Activated CD4-positive, alpha-beta memory T cell treated with anti-CD3 and anti-CD28 coated beads, Interleukin-2, amount 10 ng/mL, durations not matched to agents 7 days and 5 days (primary cell): ENCODE measurements at regions of chr11 and their contacts with region 1.

Region 1: GRCh38 chr11:61049859-61050258 is 52.4 kb upstream of the CD5 start:
- DNase-seq: no peak
- H3K4me3 Mint-ChIP-seq: no peak overlapping the region
- H3K27ac Mint-ChIP-seq: peak overlapping the region; percentile 65
- H3K4me1 Mint-ChIP-seq: peaks cover 77% of the 10 kb centered on the region
- H3K27me3 Mint-ChIP-seq: no peaks in the 10 kb centered on the region

Region 2: DNA sequence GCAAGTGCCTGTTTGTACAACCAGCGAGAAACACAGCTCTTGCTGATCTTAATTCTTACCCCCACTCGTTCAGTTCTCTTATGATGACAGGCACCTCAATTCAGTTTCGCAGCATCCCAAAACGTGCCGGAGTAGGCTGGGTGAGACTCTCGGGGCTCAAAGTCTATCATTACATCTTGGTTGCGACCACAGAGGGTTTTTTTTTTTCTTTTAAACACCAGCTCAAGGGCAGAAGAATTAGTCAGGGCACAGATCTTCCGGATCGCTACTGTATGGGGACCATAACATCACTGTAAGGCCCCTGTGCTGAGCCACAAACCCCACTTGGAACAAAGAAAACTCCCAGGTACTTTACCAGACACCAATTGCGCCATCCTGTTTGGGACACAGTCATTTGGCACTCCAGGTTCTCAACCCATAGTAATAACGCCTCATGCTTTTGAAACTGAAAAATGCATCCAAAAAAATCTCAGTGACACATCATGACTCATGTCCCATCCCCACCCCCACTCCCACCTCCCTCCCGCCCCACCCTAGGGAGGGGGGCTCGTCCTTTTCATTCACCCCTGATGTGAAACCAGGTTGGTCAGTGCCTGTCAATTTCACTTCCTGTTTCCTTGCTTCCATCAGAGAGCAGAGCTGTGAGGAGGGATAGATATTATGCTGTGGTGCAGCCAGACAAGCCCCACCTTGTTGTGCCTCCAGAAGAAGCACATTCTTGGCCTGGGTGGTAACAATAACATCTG is 11.4 kb after region 1 on chr11:
- CTCF ChIA-PET with region 1: interaction called, 35 read pairs
- POLR2A ChIA-PET with region 1: interaction called, 139 read pairs
- DNase-seq: peak; percentile 87
- H3K4me3 Mint-ChIP-seq: peak overlapping the region; percentile 65
- H3K27ac Mint-ChIP-seq: peak overlapping the region; percentile 96
- H3K4me1 Mint-ChIP-seq: peaks cover 87% of the 10 kb centered on the region
- H3K27me3 Mint-ChIP-seq: no peaks in the 10 kb centered on the region